Activated CD4-positive, alpha-beta T cell treated with anti-CD3 and anti-CD28 coated beads, Interleukin-2, amount 10 ng/mL, durations not matched to agents 7 days and 5 days (primary cell): ENCODE measurements at regions of chr2 and their contacts with region 1.

Region 1: DNA sequence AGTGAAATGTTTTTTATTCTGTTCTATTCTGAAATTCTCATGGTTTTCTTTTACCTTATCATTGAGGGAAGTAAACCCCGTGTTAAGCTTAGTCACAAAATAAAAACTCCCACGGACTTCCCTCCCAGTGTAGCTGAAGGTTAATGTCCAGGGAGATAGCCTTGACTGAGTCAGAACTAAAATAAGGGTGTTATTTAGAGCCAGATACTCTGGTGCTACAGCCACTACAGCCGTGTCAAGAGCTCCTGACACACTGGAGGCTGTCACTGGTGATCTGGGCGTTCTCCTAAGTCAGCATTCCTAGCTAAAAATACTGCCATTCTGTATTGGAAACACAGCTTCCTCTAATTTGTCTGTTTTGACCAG is 82.0 kb upstream of the RANBP2 start:
- DNase-seq: no peak
- H3K4me3 Mint-ChIP-seq: no peak overlapping the region
- H3K27ac Mint-ChIP-seq: no peak overlapping the region
- H3K4me1 Mint-ChIP-seq: peaks cover 50% of the 10 kb centered on the region
- H3K27me3 Mint-ChIP-seq: no peaks in the 10 kb centered on the region

Region 2: DNA sequence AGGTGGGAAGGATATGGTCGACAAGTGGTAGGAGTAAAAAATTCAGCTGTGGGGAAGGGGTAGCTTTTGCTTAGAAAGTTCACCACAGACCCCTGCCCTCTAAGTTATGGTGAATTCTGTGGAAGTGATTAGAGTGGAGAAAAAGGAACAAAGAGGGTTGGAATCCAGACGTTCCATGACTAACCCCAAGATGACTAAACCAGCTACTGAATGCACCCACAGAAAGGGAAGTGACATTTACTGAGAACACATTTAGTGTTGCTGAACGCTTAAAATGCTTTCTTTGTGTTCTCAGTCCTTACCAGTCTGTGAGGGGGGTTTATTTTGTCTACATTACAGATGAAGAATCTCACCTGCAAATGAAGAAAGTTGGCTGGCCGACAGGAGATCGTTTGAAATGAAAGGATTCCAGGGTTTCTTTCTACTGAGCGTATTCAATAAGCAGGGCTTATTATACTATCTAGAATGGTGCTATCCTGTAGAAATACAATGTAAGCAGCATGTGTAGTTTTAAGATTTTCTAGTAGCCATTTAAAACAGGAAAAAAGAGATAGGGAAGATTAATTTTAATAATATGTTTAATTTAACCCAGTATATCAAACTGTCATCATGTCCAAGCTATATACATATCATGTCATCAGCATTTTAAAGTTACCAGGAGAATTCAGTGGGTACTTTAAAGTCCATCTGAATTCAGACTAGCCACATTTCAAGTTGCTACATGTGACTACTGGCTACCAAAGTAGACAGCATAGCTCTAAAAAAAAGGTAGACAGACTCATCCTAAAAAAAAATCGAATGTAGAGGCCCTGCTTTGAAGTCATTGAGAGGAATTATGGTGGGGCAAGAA is 42.9 kb before region 1 on chr2:
- CTCF ChIA-PET with region 1: interaction called, 17 read pairs
- POLR2A ChIA-PET with region 1: no interaction called
- DNase-seq: no peak
- H3K4me3 Mint-ChIP-seq: no peak overlapping the region
- H3K27ac Mint-ChIP-seq: peak overlapping the region; percentile 1
- H3K4me1 Mint-ChIP-seq: peaks cover 52% of the 10 kb centered on the region
- H3K27me3 Mint-ChIP-seq: no peaks in the 10 kb centered on the region

Region 3: GRCh38 chr2:108607706-108608301 is 29.5 kb before region 1 on chr2:
- CTCF ChIA-PET with region 1: interaction called, 30 read pairs
- POLR2A ChIA-PET with region 1: interaction called, 3 read pairs
- DNase-seq: peak; percentile 56
- H3K4me3 Mint-ChIP-seq: no peak overlapping the region
- H3K27ac Mint-ChIP-seq: no peak overlapping the region
- H3K4me1 Mint-ChIP-seq: peaks cover 60% of the 10 kb centered on the region
- H3K27me3 Mint-ChIP-seq: no peaks in the 10 kb centered on the region

Region 4: GRCh38 chr2:108621087-108621559 is 16.2 kb before region 1 on chr2:
- CTCF ChIA-PET with region 1: interaction called, 41 read pairs
- POLR2A ChIA-PET with region 1: interaction called, 4 read pairs
- DNase-seq: peak; percentile 86
- H3K4me3 Mint-ChIP-seq: peak overlapping the region; percentile 82
- H3K27ac Mint-ChIP-seq: peak overlapping the region; percentile 91
- H3K4me1 Mint-ChIP-seq: peaks cover 79% of the 10 kb centered on the region
- H3K27me3 Mint-ChIP-seq: no peaks in the 10 kb centered on the region

Region 5: GRCh38 chr2:108870069-108870644 is 232.9 kb after region 1 on chr2:
- CTCF ChIA-PET with region 1: no interaction called
- POLR2A ChIA-PET with region 1: no interaction called
- DNase-seq: no peak
- H3K4me3 Mint-ChIP-seq: no peak overlapping the region
- H3K27ac Mint-ChIP-seq: no peak overlapping the region
- H3K4me1 Mint-ChIP-seq: peaks cover 6% of the 10 kb centered on the region
- H3K27me3 Mint-ChIP-seq: no peaks in the 10 kb centered on the region